ENCODE measurements at regions of chr5 and their contacts with region 1.

Region 1: GRCh38 chr5:13843175-13843846 is 101.2 kb downstream of the DNAH5 start:
- DNase-seq: no peak
- ATAC-seq: no peak
- H3K4me3 ChIP-seq: no peak overlapping the region
- H3K27ac ChIP-seq: no peak overlapping the region
- H3K4me1 ChIP-seq: no peaks in the 10 kb centered on the region
- H3K27me3 ChIP-seq: no peaks in the 10 kb centered on the region
- CTCF ChIP-seq: no peak

Region 2: GRCh38 chr5:13785781-13786415 is 57.4 kb before region 1 on chr5:
- CTCF ChIA-PET with region 1: interaction called, 11 read pairs
- POLR2A ChIA-PET with region 1: no interaction called
- in situ Hi-C with region 1: no loop called
- intact Hi-C with region 1: no loop called
- DNase-seq: no peak
- ATAC-seq: no peak
- H3K4me3 ChIP-seq: no peak overlapping the region
- H3K27ac ChIP-seq: no peak overlapping the region
- H3K4me1 ChIP-seq: no peaks in the 10 kb centered on the region
- H3K27me3 ChIP-seq: no peaks in the 10 kb centered on the region
- CTCF ChIP-seq: no peak

Region 3: GRCh38 chr5:13994621-13995253 is 151.4 kb after region 1 on chr5:
- CTCF ChIA-PET with region 1: no interaction called
- POLR2A ChIA-PET with region 1: no interaction called
- in situ Hi-C with region 1: no loop called
- intact Hi-C with region 1: no loop called
- DNase-seq: no peak
- ATAC-seq: peak; percentile 53
- H3K4me3 ChIP-seq: peak overlapping the region in 1 of 2 experiments; percentile 15; a peak in 2 of 4 replicates
- H3K27ac ChIP-seq: peak overlapping the region; percentile 98
- H3K4me1 ChIP-seq: peaks cover 63% of the 10 kb centered on the region
- H3K27me3 ChIP-seq: no peaks in the 10 kb centered on the region
- CTCF ChIP-seq: no peak

Measured in Panc1 (cell line).